Mammary epithelial cell (primary cell): ENCODE measurements at regions of chr1 and their contacts with region 1.

Region 1: GRCh38 chr1:63691701-63692425 is 82.0 kb upstream of the ROR1 start:
- DNase-seq: peak; percentile 68
- H3K4me3 ChIP-seq: no peak overlapping the region
- H3K27ac ChIP-seq: no peak overlapping the region
- H3K4me1 ChIP-seq: no peaks in the 10 kb centered on the region
- H3K27me3 ChIP-seq: no peaks in the 10 kb centered on the region
- CTCF ChIP-seq: peak; percentile 83 to 86

Region 2: DNA sequence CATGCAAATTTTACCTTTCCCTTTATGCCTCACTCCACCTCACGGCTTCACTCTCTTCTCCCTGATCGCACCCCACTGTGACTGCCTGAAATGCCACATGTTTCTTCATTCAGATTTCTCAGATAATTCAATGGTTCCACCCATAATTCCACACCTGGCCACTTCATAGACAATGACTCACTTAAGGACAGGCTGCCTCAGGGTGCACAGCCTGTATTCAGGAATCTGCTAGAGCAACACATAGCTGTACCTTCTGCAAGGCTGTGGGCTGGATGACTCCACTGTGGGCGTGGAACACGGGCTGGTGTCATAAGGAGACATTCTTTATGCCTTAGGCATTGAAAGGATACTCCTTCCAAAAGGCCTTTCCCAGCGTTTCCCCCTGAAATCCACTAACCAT is 1461.2 kb before region 1 on chr1:
- CTCF ChIA-PET with region 1: interaction called, 14 read pairs
- dilution Hi-C with region 1: no loop called
- in situ Hi-C with region 1: no loop called
- intact Hi-C with region 1: no loop called
- DNase-seq: peak; percentile 99
- H3K4me3 ChIP-seq: no peak overlapping the region
- H3K27ac ChIP-seq: peak overlapping the region; percentile 82
- H3K4me1 ChIP-seq: peaks cover 53% of the 10 kb centered on the region
- H3K27me3 ChIP-seq: no peaks in the 10 kb centered on the region
- CTCF ChIP-seq: no peak

Region 3: DNA sequence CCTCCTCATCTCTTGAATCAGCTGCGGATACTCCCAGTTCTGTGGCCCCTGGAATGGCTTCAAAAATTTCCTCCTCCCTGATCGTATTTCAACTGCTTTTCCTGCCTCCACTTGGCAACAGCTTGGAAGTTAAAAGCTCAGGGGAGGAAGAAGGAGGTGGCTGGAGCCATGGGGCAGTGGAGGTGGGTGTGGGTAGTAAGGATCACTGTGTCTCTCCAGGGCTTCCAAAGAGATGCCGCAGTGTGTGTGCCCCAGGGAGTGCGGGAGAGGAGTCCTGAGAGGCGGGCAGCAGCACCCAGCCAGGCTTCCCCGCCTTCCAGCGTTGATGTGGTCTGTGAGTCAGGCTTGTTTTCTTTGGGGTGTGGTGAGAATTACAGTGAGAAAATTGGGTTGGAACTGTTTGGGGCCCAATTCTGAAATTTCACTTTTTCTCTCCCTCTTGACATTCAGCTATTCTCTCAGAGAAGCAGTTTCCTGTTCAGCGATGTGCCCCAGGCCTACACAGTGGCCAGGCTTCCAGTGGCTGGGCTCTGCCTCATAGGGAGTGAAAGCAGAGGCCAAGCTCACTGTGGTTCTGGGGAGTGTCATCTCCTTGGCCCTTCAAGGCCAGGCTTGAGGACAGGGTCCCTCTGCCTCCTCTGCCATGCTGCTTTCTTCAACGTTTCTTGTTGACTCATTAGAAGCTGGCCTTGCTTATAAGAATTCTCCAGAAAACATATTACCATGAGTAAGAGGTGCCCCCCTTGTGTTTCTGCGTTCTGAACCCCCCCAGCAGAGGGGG is 29.6 kb before region 1 on chr1:
- CTCF ChIA-PET with region 1: no interaction called
- dilution Hi-C with region 1: no loop called
- in situ Hi-C with region 1: no loop called
- intact Hi-C with region 1: loop called (anchors 1 kb)
- DNase-seq: peak; percentile 95
- H3K4me3 ChIP-seq: no peak overlapping the region
- H3K27ac ChIP-seq: peak overlapping the region; percentile 99
- H3K4me1 ChIP-seq: peaks cover 51% of the 10 kb centered on the region
- H3K27me3 ChIP-seq: no peaks in the 10 kb centered on the region
- CTCF ChIP-seq: no peak

Region 4: DNA sequence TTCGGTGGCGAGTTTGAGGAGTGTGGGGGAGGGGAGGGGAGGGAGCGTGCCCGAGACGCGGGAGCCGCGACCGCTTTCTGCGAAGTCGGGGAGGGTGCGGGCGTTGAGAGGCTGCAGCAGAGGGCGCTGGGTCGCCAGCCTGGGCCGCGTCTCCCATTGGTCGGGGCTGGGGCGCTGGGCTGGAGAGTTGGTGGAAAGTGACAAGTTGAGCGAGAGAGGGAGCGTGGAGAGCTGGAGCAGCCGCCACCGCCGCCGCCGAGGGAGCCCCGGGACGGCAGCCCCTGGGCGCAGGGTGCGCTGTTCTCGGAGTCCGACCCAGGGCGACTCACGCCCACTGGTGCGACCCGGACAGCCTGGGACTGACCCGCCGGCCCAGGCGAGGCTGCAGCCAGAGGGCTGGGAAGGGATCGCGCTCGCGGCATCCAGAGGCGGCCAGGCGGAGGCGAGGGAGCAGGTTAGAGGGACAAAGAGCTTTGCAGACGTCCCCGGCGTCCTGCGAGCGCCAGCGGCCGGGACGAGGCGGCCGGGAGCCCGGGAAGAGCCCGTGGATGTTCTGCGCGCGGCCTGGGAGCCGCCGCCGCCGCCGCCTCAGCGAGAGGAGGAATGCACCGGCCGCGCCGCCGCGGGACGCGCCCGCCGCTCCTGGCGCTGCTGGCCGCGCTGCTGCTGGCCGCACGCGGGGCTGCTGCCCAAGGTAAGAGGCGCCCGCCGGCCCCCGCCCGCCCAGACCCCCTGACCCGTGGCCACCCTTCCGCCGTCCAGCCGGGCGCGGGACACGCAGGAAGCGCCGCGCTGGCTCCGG is 82.2 kb after region 1 on chr1 and contains the start of gene ROR1:
- CTCF ChIA-PET with region 1: interaction called, 14 read pairs
- dilution Hi-C with region 1: no loop called
- in situ Hi-C with region 1: no loop called
- intact Hi-C with region 1: loop called (anchors 2 kb)
- DNase-seq: peak; percentile 82
- H3K4me3 ChIP-seq: peak within 1 kb of the TSS; percentile 87 to 93 (median 90)
- H3K27ac ChIP-seq: peak within 1 kb of the TSS; percentile 48
- H3K4me1 ChIP-seq: peaks cover 29% of the 10 kb centered on the region
- H3K27me3 ChIP-seq: no peaks in the 10 kb centered on the region
- CTCF ChIP-seq: peak; percentile 23 to 84
- total RNA-seq, gene ROR1: 11.5 to 21.8 TPM

Region 5: GRCh38 chr1:63935143-63935542 is 243.3 kb after region 1 on chr1:
- CTCF ChIA-PET with region 1: interaction called, 15 read pairs
- dilution Hi-C with region 1: no loop called
- in situ Hi-C with region 1: no loop called
- intact Hi-C with region 1: no loop called
- DNase-seq: peak; percentile 40
- H3K4me3 ChIP-seq: no peak overlapping the region
- H3K27ac ChIP-seq: no peak overlapping the region
- H3K4me1 ChIP-seq: no peaks in the 10 kb centered on the region
- H3K27me3 ChIP-seq: no peaks in the 10 kb centered on the region
- CTCF ChIP-seq: peak; percentile 36 to 81